Psoas muscle (tissue), 8 donors: ENCODE measurements at regions of chr15 and their contacts with region 1.

Region 1: DNA sequence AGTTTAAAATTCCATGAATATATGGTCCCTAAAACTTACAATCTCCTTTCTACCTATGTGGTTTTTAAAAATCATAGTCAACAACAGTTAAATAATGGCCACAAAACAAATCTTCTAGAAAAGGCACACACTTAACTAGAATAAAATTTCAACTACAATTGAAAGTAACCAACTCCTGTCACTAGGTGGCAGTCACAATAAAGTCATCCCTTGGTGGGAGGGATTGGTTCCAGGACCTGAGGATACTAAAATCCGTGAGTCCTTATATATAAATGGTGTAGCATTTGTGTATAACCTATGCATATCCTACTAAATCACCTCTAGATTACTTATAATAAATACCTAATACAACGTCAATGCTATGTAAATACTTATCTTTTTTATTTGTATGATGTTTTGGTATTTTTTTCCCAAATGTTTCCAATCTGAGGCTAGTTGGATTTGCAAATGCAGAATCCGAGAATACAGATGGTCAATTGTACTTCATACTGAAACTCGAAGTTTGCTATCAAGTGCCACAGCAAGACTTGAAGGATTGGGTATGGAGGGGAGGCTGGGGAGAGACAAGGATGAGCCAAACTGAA is 172.6 kb downstream of the FMN1 start:
- DNase-seq: no peak
- ATAC-seq: peak; percentile 77 to 92 (median 82)
- H3K4me3 ChIP-seq: no peak overlapping the region
- H3K27ac ChIP-seq: peak overlapping the region; percentile 81
- H3K4me1 ChIP-seq: peaks cover 10% of the 10 kb centered on the region
- H3K27me3 ChIP-seq: no peaks in the 10 kb centered on the region
- CTCF ChIP-seq: peak; percentile 66

Region 2: GRCh38 chr15:33067941-33068481 is 46.1 kb after region 1 on chr15:
- intact Hi-C with region 1: loop called in 1 of 2 experiments (anchors 2 kb)
- DNase-seq: peak; percentile 50 to 74
- ATAC-seq: peak; percentile 73 to 81 (median 76)
- H3K4me3 ChIP-seq: peak overlapping the region; percentile 59
- H3K27ac ChIP-seq: peak overlapping the region; percentile 56
- H3K4me1 ChIP-seq: peaks cover 18% of the 10 kb centered on the region
- H3K27me3 ChIP-seq: no peaks in the 10 kb centered on the region
- CTCF ChIP-seq: no peak

Region 3: DNA sequence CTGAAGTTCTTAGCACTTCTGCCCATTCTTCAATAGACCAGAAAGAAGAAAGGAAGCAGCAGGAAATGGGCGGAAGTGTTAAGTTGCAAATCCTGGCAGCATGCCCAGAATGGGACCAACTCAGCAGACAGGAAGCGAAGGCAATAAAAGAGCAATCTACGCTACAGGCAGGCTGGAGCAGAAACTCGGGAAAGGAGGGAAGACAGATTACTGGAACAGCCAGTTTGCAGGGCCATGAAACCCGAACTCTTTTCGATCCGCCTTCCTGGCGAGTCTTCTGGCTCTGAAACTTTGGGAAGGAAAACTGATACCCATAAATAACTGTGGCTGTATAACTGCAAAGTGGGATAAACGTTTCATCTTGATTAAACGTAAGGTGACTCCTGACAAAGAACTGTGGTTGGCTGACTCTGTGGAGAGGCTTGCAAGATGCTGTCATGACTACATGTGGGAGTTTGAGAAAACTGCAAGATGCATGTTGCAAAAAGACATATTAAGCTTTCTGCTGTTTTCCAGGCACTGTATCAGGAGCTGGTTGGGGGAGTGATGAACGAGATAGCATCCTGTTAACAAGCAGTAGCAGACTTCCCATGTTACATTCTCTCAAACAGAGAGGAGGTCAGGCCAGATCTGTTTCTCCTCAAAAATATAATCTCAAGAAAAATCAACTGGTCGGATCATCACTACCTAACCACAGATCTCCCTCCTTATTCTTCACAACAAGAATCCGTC is 104.8 kb after region 1 on chr15:
- intact Hi-C with region 1: loop called in 1 of 2 experiments (anchors 5 kb)
- DNase-seq: peak; percentile 68 to 78
- ATAC-seq: peak; percentile 69 to 82 (median 78)
- H3K4me3 ChIP-seq: no peak overlapping the region
- H3K27ac ChIP-seq: peak overlapping the region; percentile 37
- H3K4me1 ChIP-seq: peaks cover 11% of the 10 kb centered on the region
- H3K27me3 ChIP-seq: peaks cover 0 to 2% (median 0%) of the 10 kb centered on the region in 3 donors
- CTCF ChIP-seq: no peak

Region 4: GRCh38 chr15:33132722-33133345 is 110.9 kb after region 1 on chr15:
- intact Hi-C with region 1: loop called (anchors 2 to 5 kb)
- DNase-seq: no peak
- ATAC-seq: peak; percentile 62 to 78 (median 66)
- H3K4me3 ChIP-seq: no peak overlapping the region
- H3K27ac ChIP-seq: no peak overlapping the region
- H3K4me1 ChIP-seq: peaks cover 38% of the 10 kb centered on the region
- H3K27me3 ChIP-seq: no peaks in the 10 kb centered on the region
- CTCF ChIP-seq: peak; percentile 67